AG04449 (cell line): ENCODE measurements at regions of chr6 and their contacts with region 1.

Region 1: GRCh38 chr6:134882426-134883038 is 67.4 kb downstream of the ALDH8A1 start:
- DNase-seq: peak; percentile 57
- H3K4me3 ChIP-seq: no peak overlapping the region
- CTCF ChIP-seq: peak; percentile 81

Region 2: DNA sequence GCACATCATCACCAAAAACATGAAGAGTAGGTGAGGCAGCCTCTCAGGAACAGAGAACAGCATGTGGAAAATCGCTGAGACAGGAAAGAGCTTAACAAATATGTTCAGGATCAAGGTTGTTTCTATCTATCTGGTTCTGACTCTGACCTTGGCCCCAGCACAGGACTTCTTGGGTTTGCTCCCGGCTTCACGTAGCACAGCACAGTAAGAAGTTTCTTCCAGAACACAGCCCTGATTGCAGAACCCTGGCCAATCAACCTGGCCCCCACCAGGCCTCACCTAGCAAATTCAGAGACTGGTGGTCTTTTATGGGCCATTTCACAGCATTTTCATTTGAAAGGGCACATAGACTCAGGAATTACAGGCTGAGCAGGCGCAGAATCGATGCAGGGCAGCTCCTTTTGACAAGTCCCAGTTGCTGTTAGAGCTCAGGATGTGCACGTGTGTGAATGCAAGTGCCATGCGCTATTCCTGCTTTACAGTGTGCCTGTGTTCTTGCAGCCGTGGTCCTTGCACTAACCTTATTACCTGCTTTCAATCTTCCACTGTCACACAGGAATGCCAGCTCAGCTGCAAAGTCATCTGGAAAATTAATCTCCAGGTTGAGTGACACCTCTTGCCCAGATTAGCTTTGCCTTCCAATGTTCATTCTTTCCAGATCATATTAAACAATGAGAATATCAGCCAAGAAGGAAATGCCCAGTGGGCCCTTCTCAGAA is 729.6 kb before region 1 on chr6:
- CTCF ChIA-PET with region 1: interaction called, 98 read pairs
- POLR2A ChIA-PET with region 1: no interaction called
- DNase-seq: no peak
- H3K4me3 ChIP-seq: no peak overlapping the region
- CTCF ChIP-seq: no peak

Region 3: GRCh38 chr6:134174672-134175198 is 707.8 kb before region 1 on chr6:
- CTCF ChIA-PET with region 1: interaction called, 25 read pairs
- POLR2A ChIA-PET with region 1: interaction called, 5 read pairs
- DNase-seq: no peak
- H3K4me3 ChIP-seq: peak overlapping the region; percentile 90
- CTCF ChIP-seq: no peak

Region 4: GRCh38 chr6:134853111-134854055 is 29.1 kb before region 1 on chr6:
- CTCF ChIA-PET with region 1: interaction called, 12 read pairs
- POLR2A ChIA-PET with region 1: no interaction called
- DNase-seq: no peak
- H3K4me3 ChIP-seq: no peak overlapping the region
- CTCF ChIP-seq: no peak

Region 5: DNA sequence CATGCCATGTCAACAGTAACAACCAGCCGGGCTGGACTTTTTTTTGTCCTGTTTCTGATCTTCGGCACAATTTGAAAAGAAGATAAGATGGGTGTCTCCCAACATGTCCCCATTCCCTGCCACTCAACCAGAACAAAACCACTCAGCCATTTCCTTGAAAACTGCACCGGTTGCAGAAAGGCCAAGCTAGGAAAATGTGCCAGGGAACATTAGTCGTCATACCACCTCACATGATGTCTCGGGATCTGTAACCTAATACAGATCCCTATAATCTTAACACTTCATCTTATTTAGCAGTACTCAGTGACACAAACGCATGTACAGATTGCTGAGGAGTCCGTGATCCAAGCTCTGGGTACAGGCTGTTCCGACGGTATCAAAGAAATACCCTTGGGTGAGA is 20.9 kb after region 1 on chr6:
- CTCF ChIA-PET with region 1: interaction called, 14 read pairs
- POLR2A ChIA-PET with region 1: no interaction called
- DNase-seq: no peak
- H3K4me3 ChIP-seq: no peak overlapping the region
- CTCF ChIP-seq: no peak